ENCODE measurements at regions of chr10 and their contacts with region 1.

Region 1: DNA sequence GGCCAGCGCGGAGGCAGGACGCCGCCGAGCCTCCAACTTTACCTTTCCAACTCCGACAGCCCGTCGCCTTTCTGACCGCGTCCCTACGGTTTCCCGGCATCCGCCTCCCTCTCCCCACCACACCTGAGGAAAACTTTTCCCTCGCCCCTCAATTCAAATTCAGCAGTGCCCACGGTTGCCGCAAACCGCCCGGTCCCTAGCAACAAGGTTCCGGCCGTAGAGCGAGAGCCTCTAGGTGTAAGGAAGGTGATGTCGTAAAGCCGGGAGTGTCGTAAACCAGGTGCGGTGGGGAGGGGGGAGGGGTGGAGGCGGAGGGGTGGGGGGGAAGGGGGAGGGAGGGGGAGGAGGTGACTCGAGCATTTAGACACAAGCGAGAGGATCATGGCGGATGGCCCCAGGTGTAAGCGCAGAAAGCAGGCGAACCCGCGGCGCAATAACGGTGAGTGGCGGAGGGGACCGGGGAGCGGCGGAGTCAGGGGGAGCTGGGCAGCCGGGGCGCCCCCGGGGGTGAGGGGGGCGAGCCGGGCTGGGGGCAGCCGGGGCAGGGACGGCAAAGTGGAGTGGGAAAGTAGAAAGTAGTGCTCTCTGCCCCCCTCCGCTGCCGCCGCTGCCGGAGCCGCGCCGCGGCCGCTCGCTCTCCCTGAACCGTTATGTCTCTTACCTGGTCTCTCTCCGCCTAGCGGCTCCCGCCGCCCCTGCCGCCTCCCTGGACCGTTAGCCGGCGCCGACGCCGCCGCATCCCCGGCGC is at the start of gene ZEB1:
- DNase-seq: peak; percentile 86 to 95 (median 91)
- ATAC-seq: peak; percentile 33 to 78 (median 68)
- H3K4me3 ChIP-seq: peak within 1 kb of the TSS; percentile 66 to 96 (median 90)
- H3K27ac ChIP-seq: peak within 1 kb of the TSS; percentile 91 to 99 (median 98)
- H3K4me1 ChIP-seq: peaks cover 0 to 46% (median 17%) of the 10 kb centered on the region in 12 donors
- H3K27me3 ChIP-seq: no peaks in the 10 kb centered on the region
- CTCF ChIP-seq: peak; percentile 23 to 70 (median 56)
- POLR2A ChIP-seq: no peak
- total RNA-seq, gene ZEB1: 74.0 to 135 (median 95.9) TPM

Region 2: GRCh38 chr10:31031558-31032257 is 287.3 kb before region 1 on chr10 and contains the start of gene ZNF438:
- intact Hi-C with region 1: loop called in 9 of 10 experiments (anchors 1 to 5 kb)
- DNase-seq: peak; percentile 96 to 98 (median 96)
- ATAC-seq: peak; percentile 89 to 98 (median 94)
- H3K4me3 ChIP-seq: peak within 1 kb of the TSS; percentile 44 to 81 (median 70)
- H3K27ac ChIP-seq: peak within 1 kb of the TSS; percentile 97 to 100 (median 99)
- H3K4me1 ChIP-seq: peaks cover 0 to 58% (median 29%) of the 10 kb centered on the region in 12 donors
- H3K27me3 ChIP-seq: no peaks in the 10 kb centered on the region
- CTCF ChIP-seq: peak; percentile 39 to 85 (median 68)
- POLR2A ChIP-seq: peak in 1 of 2 donors; percentile 79
- total RNA-seq, gene ZNF438: 11.1 to 14.7 (median 13.2) TPM

Region 3: GRCh38 chr10:31133628-31134302 is 185.3 kb before region 1 on chr10:
- intact Hi-C with region 1: loop called in 2 of 10 experiments (anchors 1 to 5 kb)
- DNase-seq: peak; percentile 88 to 92 (median 90)
- ATAC-seq: peak; percentile 88 to 94 (median 92)
- H3K4me3 ChIP-seq: peak overlapping the region; percentile 1 to 66 (median 50)
- H3K27ac ChIP-seq: peak overlapping the region; percentile 52 to 95 (median 88)
- H3K4me1 ChIP-seq: peaks cover 0 to 56% (median 18%) of the 10 kb centered on the region in 12 donors
- H3K27me3 ChIP-seq: no peaks in the 10 kb centered on the region
- CTCF ChIP-seq: no peak
- POLR2A ChIP-seq: peak in 1 of 2 donors; percentile 51

Region 4: GRCh38 chr10:31299119-31299518 is 19.9 kb before region 1 on chr10:
- intact Hi-C with region 1: no loop called
- DNase-seq: no peak
- ATAC-seq: no peak
- H3K4me3 ChIP-seq: no peak overlapping the region
- H3K27ac ChIP-seq: no peak overlapping the region
- H3K4me1 ChIP-seq: peaks cover 0 to 7% (median 0%) of the 10 kb centered on the region in 12 donors
- H3K27me3 ChIP-seq: no peaks in the 10 kb centered on the region
- CTCF ChIP-seq: no peak
- POLR2A ChIP-seq: no peak

Region 5: DNA sequence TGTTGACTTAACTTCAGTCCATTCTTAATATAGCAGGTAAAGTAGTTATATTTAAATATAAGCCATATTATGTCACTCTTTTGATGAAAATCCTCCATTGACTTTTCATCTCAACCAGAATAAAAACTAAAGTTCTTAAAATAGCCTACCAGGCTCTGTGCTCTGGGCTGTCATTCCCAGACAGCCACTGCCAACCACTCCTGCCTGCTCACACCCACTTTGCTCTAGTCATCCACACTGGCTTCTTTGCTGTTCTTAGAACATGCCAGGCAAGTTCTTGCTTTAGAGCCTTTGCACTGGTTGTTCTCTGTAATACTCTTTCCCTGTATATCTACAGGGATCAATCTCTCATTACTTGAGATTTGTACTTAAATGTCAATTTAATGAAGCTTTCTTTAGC is 80.6 kb after region 1 on chr10:
- intact Hi-C with region 1: loop called in 1 of 10 experiments (anchors 5 kb)
- DNase-seq: peak in 4 of 5 donors; percentile 50 to 75 (median 62)
- ATAC-seq: peak; percentile 94 to 97 (median 95)
- H3K4me3 ChIP-seq: peak overlapping the region in 3 of 12 donors; percentile 11 to 37 (median 33)
- H3K27ac ChIP-seq: peak overlapping the region; percentile 34 to 83 (median 64)
- H3K4me1 ChIP-seq: peaks cover 4 to 95% (median 55%) of the 10 kb centered on the region in 12 donors
- H3K27me3 ChIP-seq: no peaks in the 10 kb centered on the region
- CTCF ChIP-seq: no peak
- POLR2A ChIP-seq: no peak

Region 6: DNA sequence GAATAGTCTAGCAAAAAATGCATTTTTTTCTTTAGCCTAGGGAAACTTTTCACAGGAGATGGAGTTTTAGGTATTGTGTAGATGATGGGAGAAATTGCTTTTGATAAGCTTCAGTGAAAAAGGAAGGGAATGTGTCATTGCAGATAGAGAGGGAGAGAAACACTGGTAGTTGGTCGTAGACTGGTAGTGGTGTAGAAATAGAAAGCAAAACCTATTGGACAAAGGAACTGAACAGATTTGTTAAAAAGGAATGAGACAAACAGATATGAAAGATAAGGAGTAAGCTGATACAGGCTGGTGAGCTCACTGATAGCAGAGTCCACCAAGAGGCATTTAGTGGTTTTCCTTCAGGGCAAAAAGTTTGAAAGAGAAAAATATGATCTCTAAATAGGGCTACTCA is 94.3 kb after region 1 on chr10:
- intact Hi-C with region 1: no loop called
- DNase-seq: no peak
- ATAC-seq: peak in 1 of 4 donors; percentile 12
- H3K4me3 ChIP-seq: no peak overlapping the region
- H3K27ac ChIP-seq: no peak overlapping the region
- H3K4me1 ChIP-seq: peaks cover 0 to 29% (median 9%) of the 10 kb centered on the region in 12 donors
- H3K27me3 ChIP-seq: no peaks in the 10 kb centered on the region
- CTCF ChIP-seq: no peak
- POLR2A ChIP-seq: no peak

Region 7: GRCh38 chr10:31479752-31480151 is 160.7 kb after region 1 on chr10:
- intact Hi-C with region 1: loop called in 1 of 10 experiments (anchors 10 kb)
- DNase-seq: no peak
- ATAC-seq: no peak
- H3K4me3 ChIP-seq: no peak overlapping the region
- H3K27ac ChIP-seq: no peak overlapping the region
- H3K4me1 ChIP-seq: peaks cover 0 to 7% (median 0%) of the 10 kb centered on the region in 12 donors
- H3K27me3 ChIP-seq: no peaks in the 10 kb centered on the region
- CTCF ChIP-seq: no peak
- POLR2A ChIP-seq: no peak

Region 8: DNA sequence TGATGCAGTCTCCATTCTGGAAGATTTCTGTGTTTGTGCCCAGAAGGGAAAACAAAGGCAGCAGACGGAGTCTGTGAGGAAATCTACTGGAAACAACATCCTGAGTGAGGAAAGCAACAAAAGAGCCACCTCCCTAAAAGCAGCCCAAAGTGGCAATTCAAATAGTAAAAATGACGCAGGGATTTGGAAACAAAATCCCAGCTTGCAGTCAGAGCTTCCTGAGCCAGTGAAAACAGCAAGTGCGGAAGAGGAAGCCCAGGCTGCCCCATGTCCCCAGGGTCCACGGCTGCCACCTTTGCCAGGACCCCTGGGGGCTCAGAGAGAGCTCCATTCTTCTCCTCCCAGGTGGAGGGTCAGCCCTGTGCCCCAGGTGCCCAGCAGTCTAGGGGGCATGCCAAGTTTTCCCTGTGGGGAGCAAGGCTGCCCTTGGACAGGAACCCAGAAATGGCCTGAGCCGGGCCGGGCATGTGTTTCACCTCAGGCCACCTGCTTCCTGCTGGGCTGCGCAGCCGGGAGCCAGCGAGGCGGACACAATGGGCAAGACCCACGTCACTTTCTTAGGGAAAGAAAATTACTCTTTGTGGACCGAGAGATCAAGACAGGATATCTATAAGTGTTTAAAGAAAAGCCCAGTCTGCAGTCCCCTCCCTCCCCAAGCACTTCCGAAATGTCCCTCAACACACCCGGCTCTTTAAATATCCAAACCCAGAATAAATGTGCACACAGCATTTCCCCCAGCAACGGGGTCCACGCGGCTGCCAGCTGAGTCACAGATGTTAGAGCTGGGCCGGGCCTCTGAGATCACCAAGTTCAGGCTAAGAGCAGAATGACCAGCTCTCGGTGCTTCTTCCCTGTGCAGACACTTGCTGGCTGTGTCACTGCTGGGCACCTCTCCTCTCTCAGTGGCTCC is 378.5 kb after region 1 on chr10:
- intact Hi-C with region 1: loop called in 3 of 10 experiments (anchors 5 to 10 kb)
- DNase-seq: peak; percentile 88 to 93 (median 92)
- ATAC-seq: peak; percentile 84 to 89 (median 86)
- H3K4me3 ChIP-seq: peak overlapping the region in 9 of 12 donors; percentile 15 to 42 (median 27)
- H3K27ac ChIP-seq: peak overlapping the region; percentile 88 to 99 (median 96)
- H3K4me1 ChIP-seq: peaks cover 11 to 81% (median 54%) of the 10 kb centered on the region in 12 donors
- H3K27me3 ChIP-seq: no peaks in the 10 kb centered on the region
- CTCF ChIP-seq: no peak
- POLR2A ChIP-seq: peak in 1 of 2 donors; percentile 30

Region 9: DNA sequence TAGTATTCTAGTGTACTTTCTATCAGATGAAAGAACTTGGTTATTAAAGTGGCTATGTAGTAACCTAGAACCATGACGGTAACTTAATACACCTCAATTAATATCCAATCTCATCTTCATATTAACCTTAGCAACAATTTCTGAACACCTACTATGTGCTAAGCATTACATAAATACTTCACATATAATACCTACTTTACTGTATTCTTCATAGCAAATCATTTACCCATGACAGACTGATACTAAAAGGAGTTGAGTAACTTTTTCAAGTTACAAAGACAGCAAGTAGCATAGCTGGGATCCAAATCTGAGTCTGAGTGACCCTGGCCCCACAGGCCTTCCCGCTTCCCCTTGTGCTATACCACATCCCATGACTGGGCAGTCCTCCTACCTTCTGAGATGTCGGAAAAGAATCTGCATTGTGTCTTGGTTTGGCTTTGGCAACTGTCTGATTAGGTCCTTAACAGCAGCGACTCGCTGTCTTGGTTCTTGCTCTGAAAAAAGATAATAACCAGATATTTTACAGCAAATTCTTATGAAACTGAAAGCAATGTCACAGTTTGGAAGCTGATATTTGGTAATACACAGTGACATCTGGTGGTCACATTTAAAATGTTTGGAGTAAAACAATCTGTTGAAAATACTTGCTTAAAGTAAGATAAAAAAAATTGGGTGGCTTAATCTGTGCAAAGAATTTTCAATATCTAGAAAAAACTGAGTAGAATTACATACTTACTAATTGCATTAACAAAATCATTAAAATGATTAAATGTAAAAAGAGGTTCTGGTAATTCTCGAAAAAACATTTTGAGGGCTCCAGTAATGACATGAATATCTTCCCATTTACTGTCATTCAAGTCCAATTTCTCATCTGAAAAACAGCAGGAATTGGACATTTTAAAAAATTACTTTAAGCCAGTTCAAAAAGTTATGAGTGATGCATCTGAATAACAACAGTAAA is 489.5 kb after region 1 on chr10:
- intact Hi-C with region 1: loop called in 8 of 10 experiments (anchors 5 to 10 kb)
- DNase-seq: peak; percentile 28 to 51 (median 35)
- ATAC-seq: peak; percentile 51 to 86 (median 80)
- H3K4me3 ChIP-seq: peak overlapping the region in 11 of 12 donors; percentile 18 to 60 (median 47)
- H3K27ac ChIP-seq: peak overlapping the region; percentile 13 to 86 (median 80)
- H3K4me1 ChIP-seq: peaks cover 0 to 12% (median 0%) of the 10 kb centered on the region in 12 donors
- H3K27me3 ChIP-seq: no peaks in the 10 kb centered on the region
- CTCF ChIP-seq: peak; percentile 37 to 79 (median 62)
- POLR2A ChIP-seq: no peak

Measured in heart left ventricle (tissue), 16 donors.